RWPE1 (cell line): ENCODE measurements at regions of chr10 and their contacts with region 1.

Region 1: GRCh38 chr10:99845837-99846382 is 63.5 kb downstream of the ABCC2 start:
- DNase-seq: peak; percentile 78
- H3K27ac ChIP-seq: no peak overlapping the region
- CTCF ChIP-seq: peak; percentile 88

Region 2: DNA sequence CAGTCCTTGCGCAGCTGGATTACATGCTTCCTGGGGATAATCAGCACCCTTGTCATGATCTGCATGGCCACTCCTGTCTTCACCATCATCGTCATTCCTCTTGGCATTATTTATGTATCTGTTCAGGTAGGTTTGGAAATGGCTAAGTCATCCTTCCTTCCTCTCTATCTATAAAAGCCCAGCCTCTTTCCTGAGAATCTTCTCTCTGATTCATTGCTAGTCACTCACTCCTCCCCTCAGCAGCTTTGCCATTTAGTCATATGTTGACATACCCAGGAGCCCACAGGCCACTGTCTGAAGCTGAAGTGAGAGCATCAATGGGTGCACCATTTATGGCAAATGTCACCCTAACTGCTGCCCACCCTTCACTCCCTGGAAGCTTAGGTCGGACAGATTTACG is 11.5 kb before region 1 on chr10:
- CTCF ChIA-PET with region 1: interaction called, 14 read pairs
- POLR2A ChIA-PET with region 1: no interaction called
- DNase-seq: peak; percentile 92
- H3K27ac ChIP-seq: no peak overlapping the region
- CTCF ChIP-seq: no peak

Region 3: DNA sequence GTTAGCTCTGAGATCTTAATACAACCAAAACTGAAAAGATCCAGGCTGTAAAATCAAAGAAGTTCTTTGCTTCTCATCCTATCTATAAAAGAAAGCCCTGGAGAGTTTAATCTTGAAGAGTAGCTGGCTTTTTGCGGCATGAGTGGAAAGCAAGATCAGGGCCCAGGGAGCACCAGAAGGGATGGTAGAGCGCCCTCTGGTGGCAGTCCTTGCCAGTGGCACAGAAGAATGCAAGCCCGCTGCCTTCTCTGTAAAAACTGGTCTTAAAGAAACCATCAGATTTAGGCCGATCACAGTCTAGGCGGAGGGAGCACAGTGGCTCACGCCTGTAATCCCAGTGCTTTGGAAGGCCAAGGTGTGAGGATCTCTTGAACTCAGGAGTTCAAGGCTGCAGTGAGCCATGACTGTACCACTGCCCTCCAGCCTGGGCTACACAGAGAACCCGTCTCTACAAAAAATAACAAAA is 200.1 kb after region 1 on chr10:
- CTCF ChIA-PET with region 1: interaction called, 29 read pairs
- POLR2A ChIA-PET with region 1: no interaction called
- DNase-seq: peak; percentile 77
- H3K27ac ChIP-seq: peak overlapping the region; percentile 49
- CTCF ChIP-seq: peak; percentile 93

Region 4: DNA sequence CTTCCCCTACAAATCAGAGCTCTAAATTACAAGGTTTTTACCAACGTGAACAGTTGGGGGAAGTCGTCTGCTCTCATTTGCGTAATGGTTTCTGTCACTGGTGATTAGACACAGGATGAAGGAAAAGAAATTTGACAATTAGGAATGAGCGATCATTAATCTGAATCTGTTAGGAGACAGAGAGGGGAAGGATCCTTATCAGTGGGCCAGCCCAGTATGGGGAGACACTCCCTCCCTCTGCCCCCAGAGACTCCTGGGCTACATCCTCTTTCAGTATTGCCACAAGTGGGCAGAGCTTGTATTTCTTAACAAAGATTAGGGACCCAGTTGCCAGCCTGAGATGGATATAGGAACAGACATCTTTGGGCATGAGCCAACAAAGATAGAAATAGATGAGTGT is 705.3 kb after region 1 on chr10:
- CTCF ChIA-PET with region 1: no interaction called
- POLR2A ChIA-PET with region 1: no interaction called
- DNase-seq: no peak
- H3K27ac ChIP-seq: no peak overlapping the region
- CTCF ChIP-seq: no peak